ENCODE measurements at regions of chr11 and their contacts with region 1.

Region 1: DNA sequence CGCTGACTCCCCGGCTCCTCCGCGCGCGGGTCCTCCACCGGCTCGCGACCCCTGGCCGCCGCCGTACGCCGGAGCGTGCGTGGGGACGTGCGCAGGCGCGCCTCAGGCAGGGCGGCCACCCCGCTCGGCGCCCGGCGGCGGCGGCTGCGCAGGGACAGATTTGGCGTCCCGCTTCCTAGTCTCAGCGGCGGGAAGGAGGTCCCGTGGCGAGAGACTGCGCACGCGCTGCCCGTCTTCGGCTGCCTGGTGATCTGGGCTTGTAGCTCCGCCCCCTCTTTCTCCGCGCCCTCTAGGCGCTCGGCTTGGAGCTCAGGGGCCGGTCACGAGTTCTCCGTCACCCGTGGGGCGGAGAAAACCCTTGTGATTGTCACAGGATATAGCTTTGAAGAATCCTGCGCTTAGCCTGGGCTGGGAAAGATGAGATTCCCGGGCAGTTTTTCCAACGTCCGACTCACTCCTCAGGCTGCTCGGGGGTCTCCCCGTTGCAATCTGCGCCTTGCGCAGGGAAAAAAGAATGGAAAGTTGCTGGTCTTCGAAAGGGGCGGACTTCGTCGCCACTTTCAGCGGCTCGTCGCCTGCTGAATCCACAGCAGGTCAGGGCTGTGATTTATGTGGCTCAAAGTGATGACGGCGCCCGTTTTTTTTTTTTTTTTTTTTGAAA is at the start of gene PATL1:
- DNase-seq: peak; percentile 98 to 100 (median 99)
- H3K4me3 ChIP-seq: peak within 1 kb of the TSS; percentile 83 to 92
- H3K4me3 Mint-ChIP-seq: peak within 1 kb of the TSS; percentile 92 to 99 (median 96)
- H3K27ac ChIP-seq: peak within 1 kb of the TSS; percentile 99
- H3K27ac Mint-ChIP-seq: peak within 1 kb of the TSS; percentile 97 to 100 (median 100)
- H3K4me1 ChIP-seq: peaks cover 36% of the 10 kb centered on the region
- H3K4me1 Mint-ChIP-seq: peaks cover 29 to 50% (median 38%) of the 10 kb centered on the region in 4 donors
- H3K27me3 ChIP-seq: no peaks in the 10 kb centered on the region
- H3K27me3 Mint-ChIP-seq: no peaks in the 10 kb centered on the region
- total RNA-seq, gene PATL1: 45.3 to 45.5 TPM

Region 2: GRCh38 chr11:59542142-59542810 is 126.8 kb before region 1 on chr11:
- CTCF ChIA-PET with region 1: interaction called, 7 read pairs
- POLR2A ChIA-PET with region 1: interaction called, 6 read pairs
- intact Hi-C with region 1: loop called (anchors 1 kb)
- DNase-seq: no peak
- H3K4me3 ChIP-seq: no peak overlapping the region
- H3K4me3 Mint-ChIP-seq: no peak overlapping the region
- H3K27ac ChIP-seq: no peak overlapping the region
- H3K27ac Mint-ChIP-seq: no peak overlapping the region
- H3K4me1 ChIP-seq: peaks cover 4% of the 10 kb centered on the region
- H3K4me1 Mint-ChIP-seq: peaks cover 4 to 9% (median 5%) of the 10 kb centered on the region in 4 donors
- H3K27me3 ChIP-seq: no peaks in the 10 kb centered on the region
- H3K27me3 Mint-ChIP-seq: no peaks in the 10 kb centered on the region

Region 3: DNA sequence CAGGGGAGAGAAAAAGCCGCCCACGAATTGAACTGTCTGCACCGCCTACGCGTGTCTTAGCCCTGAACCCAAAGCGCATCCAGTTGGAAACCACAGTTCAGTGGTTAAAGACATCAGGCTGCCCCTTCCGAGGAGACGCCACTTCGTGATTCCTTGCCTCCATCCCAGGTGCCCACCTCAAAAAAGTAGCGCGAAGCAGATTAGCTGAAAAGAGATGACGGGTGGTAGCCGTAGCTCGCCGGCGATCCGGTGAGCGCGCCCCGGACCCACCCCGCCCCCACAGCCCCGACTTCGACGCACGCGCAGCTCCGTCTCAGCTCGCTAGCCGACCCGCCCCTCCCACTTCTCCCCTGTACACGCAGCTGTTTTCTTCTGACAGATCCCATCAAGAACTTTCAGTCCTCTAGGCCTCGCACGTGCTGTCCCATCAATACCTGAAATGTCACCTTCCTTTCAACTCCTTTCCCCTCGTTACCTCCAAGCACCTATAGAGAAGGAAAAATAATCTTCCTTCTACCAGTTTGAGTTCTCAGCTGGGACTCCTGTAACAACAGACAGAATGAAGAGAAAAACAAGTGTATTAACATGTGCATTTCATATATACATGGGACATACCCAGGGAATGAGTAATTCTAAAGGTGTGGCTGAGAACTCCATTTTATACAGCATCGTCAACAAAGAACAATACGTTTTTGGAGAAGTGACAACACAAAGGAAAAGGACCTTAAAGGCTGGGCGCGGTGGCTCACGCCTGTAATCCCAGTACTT is 108.2 kb before region 1 on chr11:
- CTCF ChIA-PET with region 1: interaction called, 8 read pairs
- POLR2A ChIA-PET with region 1: interaction called, 29 read pairs
- intact Hi-C with region 1: no loop called
- DNase-seq: peak; percentile 75 to 86 (median 77)
- H3K4me3 ChIP-seq: peak overlapping the region; percentile 83 to 87
- H3K4me3 Mint-ChIP-seq: peak overlapping the region; percentile 93 to 99 (median 96)
- H3K27ac ChIP-seq: peak overlapping the region; percentile 58
- H3K27ac Mint-ChIP-seq: peak overlapping the region; percentile 91 to 100 (median 98)
- H3K4me1 ChIP-seq: peaks cover 21% of the 10 kb centered on the region
- H3K4me1 Mint-ChIP-seq: peaks cover 27 to 53% (median 39%) of the 10 kb centered on the region in 4 donors
- H3K27me3 ChIP-seq: no peaks in the 10 kb centered on the region
- H3K27me3 Mint-ChIP-seq: peaks cover 2 to 5% of the 10 kb centered on the region in 2 donors

Region 4: DNA sequence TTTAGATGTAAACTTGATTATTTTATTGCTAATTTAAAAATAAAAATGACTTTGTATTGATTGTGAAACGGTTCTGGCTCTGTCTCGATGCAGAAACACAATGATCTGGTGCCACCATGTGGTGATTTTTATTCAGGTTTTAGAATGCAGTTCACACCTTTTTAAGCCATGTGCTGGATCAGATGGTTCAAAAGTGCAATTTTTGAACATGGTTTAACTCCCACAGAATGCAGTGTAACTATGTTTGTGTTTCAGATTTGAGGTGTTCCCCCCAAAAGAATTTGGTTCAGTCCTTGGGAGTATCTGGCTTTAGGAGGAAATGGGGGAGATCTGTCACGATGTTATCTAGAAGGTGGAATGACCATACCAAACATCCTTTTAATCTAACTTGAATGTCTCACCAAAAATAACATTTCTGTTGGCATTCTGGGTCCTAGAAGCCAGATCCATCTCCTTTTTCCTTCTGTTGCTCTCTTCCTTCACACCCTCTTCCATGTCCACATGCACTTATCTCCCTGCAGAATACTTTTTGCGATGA is 133.6 kb after region 1 on chr11:
- CTCF ChIA-PET with region 1: interaction called, 3 read pairs
- POLR2A ChIA-PET with region 1: interaction called, 3 read pairs
- intact Hi-C with region 1: loop called (anchors 2 kb)
- DNase-seq: peak; percentile 60 to 70 (median 64)
- H3K4me3 ChIP-seq: no peak overlapping the region
- H3K4me3 Mint-ChIP-seq: no peak overlapping the region
- H3K27ac ChIP-seq: no peak overlapping the region
- H3K27ac Mint-ChIP-seq: peak overlapping the region in 2 of 7 donors; percentile 10 to 34
- H3K4me1 ChIP-seq: no peaks in the 10 kb centered on the region
- H3K4me1 Mint-ChIP-seq: no peaks in the 10 kb centered on the region
- H3K27me3 ChIP-seq: no peaks in the 10 kb centered on the region
- H3K27me3 Mint-ChIP-seq: no peaks in the 10 kb centered on the region

Region 5: DNA sequence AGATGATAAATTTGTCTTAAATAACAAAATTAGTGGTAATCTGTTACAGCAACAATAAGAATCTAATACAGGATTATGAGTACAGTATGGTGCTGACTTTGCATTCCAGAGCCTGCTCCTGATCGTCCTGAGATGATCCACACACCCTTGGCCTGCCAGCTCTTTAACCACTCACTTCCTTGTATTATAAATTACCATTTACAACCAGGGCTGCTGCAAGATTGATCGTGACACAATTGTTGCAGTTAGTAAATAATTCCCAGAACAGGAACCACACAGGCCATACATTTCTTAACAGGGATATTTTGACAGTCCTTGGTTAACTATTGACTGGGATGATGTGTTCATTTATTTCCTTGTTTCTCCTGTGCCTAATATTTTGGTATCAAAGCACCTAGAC is 180.0 kb after region 1 on chr11:
- CTCF ChIA-PET with region 1: no interaction called
- POLR2A ChIA-PET with region 1: no interaction called
- intact Hi-C with region 1: no loop called
- DNase-seq: no peak
- H3K4me3 ChIP-seq: no peak overlapping the region
- H3K4me3 Mint-ChIP-seq: no peak overlapping the region
- H3K27ac ChIP-seq: no peak overlapping the region
- H3K27ac Mint-ChIP-seq: peak overlapping the region in 1 of 7 donors; percentile 20
- H3K4me1 ChIP-seq: no peaks in the 10 kb centered on the region
- H3K4me1 Mint-ChIP-seq: no peaks in the 10 kb centered on the region
- H3K27me3 ChIP-seq: no peaks in the 10 kb centered on the region
- H3K27me3 Mint-ChIP-seq: peaks cover 0 to 2% of the 10 kb centered on the region in 2 donors

Region 6: DNA sequence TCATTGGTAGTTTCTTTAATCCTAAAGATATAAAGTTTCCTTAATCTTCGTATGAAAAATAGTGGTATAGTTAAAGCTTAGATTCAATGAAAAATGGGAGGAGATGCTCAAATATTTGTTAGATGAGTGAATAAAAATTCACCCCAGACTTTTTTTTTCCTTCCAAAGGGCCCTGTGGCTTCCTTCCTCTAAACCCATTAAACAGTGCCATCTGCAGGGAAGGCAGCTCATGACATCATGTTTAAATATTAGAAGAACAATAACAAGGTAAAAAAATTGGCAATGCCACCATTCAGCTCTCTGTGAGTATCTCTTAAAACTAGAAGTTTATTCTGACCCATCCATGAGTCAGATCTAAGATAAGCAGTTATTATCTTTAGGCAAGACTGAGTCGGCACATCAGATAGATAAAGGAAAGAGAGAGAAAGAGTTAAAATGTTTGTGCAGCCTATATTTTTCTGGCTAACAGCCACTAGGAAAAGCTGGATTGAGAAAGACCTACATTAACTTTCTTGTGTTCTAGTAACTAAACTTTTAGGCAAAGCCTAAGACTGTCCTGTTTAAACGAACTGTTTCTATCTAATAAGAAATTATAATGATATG is 250.0 kb after region 1 on chr11:
- CTCF ChIA-PET with region 1: no interaction called
- POLR2A ChIA-PET with region 1: no interaction called
- intact Hi-C with region 1: no loop called
- DNase-seq: peak in 1 of 5 donors; percentile 4
- H3K4me3 ChIP-seq: no peak overlapping the region
- H3K4me3 Mint-ChIP-seq: no peak overlapping the region
- H3K27ac ChIP-seq: no peak overlapping the region
- H3K27ac Mint-ChIP-seq: no peak overlapping the region
- H3K4me1 ChIP-seq: no peaks in the 10 kb centered on the region
- H3K4me1 Mint-ChIP-seq: no peaks in the 10 kb centered on the region
- H3K27me3 ChIP-seq: no peaks in the 10 kb centered on the region
- H3K27me3 Mint-ChIP-seq: peaks cover 1 to 2% of the 10 kb centered on the region in 2 donors

Measured in CD4-positive, alpha-beta memory T cell (primary cell).